Activated T-helper 1 cell treated with anti-CD3 and anti-CD28 coated beads, Interleukin-12 subunit alpha, Interleukin-12 subunit beta, Interleukin-2, Interleukin-4 antibody, amounts not matched to agents 30 ng/mL and 10 ng/mL and 1 ng/mL, durations not matched to agents 14 hours and 24 hours and 36 hours (primary cell): ENCODE measurements at regions of chr10 and their contacts with region 1.

Region 1: DNA sequence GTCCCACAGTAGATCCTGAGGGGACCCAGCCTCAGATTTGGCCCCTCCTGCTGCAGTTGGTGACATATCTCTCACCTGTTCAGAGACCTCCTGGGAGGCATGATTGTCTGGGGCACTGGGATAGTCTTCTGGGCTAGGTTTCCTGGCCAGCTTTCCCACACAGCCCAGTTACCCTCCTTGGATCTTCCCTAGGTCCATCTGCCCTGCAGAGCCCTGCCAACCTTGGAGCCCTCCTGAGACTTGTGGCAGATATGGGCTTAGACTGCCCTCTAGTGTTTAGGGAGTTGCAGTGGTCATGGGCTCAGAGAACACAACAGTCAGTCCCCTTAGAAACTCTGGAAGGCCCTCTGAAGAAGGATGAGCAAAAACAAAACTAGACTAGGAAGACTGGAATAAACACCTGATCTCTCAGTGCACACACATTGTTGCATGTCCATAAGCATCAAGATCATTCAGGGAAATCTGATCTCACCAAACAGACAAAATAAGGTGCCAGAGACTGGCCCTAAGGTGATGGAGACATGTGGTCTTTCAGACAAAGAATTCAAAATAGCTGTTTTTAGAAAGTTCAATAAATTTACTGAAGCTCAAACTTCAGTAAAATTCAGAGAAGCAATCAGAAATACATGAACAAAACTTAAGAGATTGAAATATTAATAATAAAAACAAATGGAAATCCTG is 324.6 kb downstream of the ATRNL1 start:
- DNase-seq: no peak
- H3K4me3 Mint-ChIP-seq: no peak overlapping the region
- H3K27ac Mint-ChIP-seq: no peak overlapping the region
- H3K4me1 Mint-ChIP-seq: no peaks in the 10 kb centered on the region
- H3K27me3 Mint-ChIP-seq: no peaks in the 10 kb centered on the region

Region 2: GRCh38 chr10:115171392-115171960 is 246.2 kb before region 1 on chr10:
- intact Hi-C with region 1: loop called (anchors 1 kb)
- DNase-seq: no peak
- H3K4me3 Mint-ChIP-seq: no peak overlapping the region
- H3K27ac Mint-ChIP-seq: no peak overlapping the region
- H3K4me1 Mint-ChIP-seq: no peaks in the 10 kb centered on the region
- H3K27me3 Mint-ChIP-seq: peaks cover 2% of the 10 kb centered on the region